Naive thymus-derived CD8-positive, alpha-beta T cell (primary cell): ENCODE measurements at regions of chr12 and their contacts with region 1.

Region 1: DNA sequence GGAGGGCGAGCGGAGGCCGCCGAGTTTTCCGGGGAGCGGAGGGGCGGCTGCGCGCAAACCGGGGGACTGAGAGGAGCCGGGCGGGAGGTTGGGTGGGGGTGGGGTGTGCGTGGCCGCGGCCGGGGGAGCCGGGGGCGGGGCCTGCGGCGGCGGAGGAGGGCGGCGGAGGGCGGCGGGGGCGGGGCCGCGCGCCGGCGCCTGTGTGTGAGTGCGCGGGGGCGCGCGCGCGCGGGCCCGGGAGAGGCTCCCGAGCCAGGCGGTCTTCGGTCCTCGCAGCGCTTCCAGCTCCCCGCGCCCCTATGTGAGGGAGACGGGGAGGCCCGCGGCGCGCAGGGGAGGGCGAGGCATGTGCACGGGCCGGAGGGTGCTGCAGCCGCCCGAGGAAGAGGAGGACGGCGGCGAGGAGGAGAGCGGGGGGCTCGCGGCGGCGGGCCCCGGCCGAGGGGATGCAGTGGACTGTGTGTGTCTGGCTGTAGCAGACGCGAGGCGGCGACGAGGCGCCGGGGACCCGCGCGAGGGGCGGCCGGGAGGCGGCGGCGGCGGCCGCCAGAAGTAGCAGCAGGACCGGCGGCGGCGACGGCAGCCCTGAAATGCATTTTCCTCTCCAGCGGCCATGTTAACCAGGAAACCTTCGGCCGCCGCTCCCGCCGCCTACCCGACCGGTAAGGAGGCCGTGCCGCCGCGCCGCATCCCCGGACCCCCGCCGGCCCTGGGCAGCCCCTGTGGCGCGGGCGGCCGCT is at the start of gene DYRK2:
- DNase-seq: peak; percentile 68 to 89 (median 79)
- ATAC-seq: peak; percentile 51 to 55
- H3K4me3 Mint-ChIP-seq: peak within 1 kb of the TSS; percentile 88 to 99 (median 96)
- H3K27ac Mint-ChIP-seq: peak within 1 kb of the TSS; percentile 92 to 99 (median 98)
- H3K4me1 Mint-ChIP-seq: peaks cover 27 to 49% (median 37%) of the 10 kb centered on the region in 4 donors
- H3K27me3 Mint-ChIP-seq: no peaks in the 10 kb centered on the region
- polyA plus RNA-seq, gene DYRK2: 47.7 to 94.7 (median 62.4) TPM

Region 2: GRCh38 chr12:67268896-67269631 is 379.6 kb before region 1 on chr12 and contains the start of gene CAND1:
- POLR2A ChIA-PET with region 1: interaction called, 10 read pairs
- DNase-seq: peak; percentile 91 to 99 (median 98)
- ATAC-seq: peak; percentile 72 to 78
- H3K4me3 Mint-ChIP-seq: peak within 1 kb of the TSS; percentile 73 to 94 (median 92)
- H3K27ac Mint-ChIP-seq: peak within 1 kb of the TSS; percentile 97 to 100 (median 98)
- H3K4me1 Mint-ChIP-seq: peaks cover 16 to 55% (median 50%) of the 10 kb centered on the region in 4 donors
- H3K27me3 Mint-ChIP-seq: no peaks in the 10 kb centered on the region
- polyA plus RNA-seq, gene CAND1: 44.5 to 66.3 (median 58.7) TPM

Region 3: GRCh38 chr12:67452119-67452805 is 196.4 kb before region 1 on chr12:
- POLR2A ChIA-PET with region 1: interaction called, 12 read pairs
- DNase-seq: no peak
- ATAC-seq: no peak
- H3K4me3 Mint-ChIP-seq: peak overlapping the region in 1 of 10 donors; percentile 64
- H3K27ac Mint-ChIP-seq: peak overlapping the region in 2 of 10 donors; percentile 18 to 53
- H3K4me1 Mint-ChIP-seq: peaks cover 35 to 59% (median 47%) of the 10 kb centered on the region in 4 donors
- H3K27me3 Mint-ChIP-seq: no peaks in the 10 kb centered on the region

Region 4: DNA sequence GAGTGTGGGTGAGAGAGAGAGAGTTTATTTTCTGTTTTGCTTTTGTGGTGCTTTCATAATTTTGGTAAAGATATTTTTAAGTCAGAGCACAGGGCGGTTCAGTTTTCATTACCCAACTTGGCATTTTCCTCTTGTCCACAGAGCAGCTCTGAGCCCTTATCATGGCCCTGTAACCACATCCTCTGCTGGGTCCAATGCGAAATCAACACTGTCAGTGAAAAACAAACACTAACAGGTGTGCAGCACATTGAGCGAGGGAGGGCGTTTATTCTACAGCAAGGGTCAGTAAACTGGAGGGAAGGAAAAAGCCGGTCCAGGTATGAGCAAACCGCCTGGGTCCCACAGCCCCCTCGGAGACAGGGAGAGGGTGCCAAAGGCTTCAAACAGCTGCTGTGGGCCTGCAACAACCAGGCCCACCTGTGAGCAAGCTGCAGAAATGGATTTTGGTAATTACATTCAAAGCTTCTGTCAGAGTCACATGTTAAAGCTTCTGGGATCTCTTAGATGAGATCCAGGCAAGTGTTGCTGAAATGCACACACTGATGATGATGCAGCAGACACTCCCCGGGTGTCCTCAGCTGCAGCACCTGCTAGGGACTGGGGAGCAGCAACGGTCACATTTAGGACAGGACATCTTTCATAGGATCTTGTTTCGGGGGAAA is 132.9 kb before region 1 on chr12:
- POLR2A ChIA-PET with region 1: interaction called, 36 read pairs
- DNase-seq: peak in 8 of 10 donors; percentile 5 to 65 (median 31)
- ATAC-seq: peak; percentile 88 to 92
- H3K4me3 Mint-ChIP-seq: peak overlapping the region; percentile 8 to 81 (median 69)
- H3K27ac Mint-ChIP-seq: peak overlapping the region; percentile 70 to 92 (median 84)
- H3K4me1 Mint-ChIP-seq: peaks cover 32 to 60% (median 52%) of the 10 kb centered on the region in 4 donors
- H3K27me3 Mint-ChIP-seq: no peaks in the 10 kb centered on the region

Region 5: DNA sequence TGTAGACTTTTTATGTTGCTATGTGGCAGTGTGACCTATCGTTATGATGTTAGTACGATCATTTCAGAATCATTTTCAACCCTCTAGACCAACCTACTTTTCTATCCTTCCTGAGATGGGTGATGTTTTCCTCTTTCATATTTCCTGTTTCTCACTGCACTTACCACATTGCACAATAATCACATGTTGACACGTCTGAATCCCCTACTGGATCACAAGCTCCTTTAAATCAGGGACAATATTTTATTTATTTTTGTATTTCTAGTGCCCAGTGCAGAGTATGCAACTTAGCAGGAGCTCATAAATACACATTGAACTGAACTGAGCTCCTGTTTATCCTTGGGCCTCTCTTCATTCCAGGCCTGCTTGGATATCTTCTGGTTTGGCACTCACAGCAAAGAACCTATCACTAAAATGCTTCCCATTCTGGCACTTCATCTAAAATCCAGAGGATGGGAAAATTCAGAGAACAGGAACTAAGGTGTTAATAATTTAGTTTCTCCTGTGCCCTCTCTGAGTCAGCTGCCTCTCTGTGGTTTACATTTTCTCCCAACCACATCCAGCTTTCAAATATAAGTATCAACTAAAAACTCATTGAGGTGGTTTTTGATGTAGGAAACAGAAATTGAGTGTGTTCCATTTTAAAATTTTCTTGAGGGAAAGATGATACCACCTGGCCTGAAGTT is 69.6 kb before region 1 on chr12:
- POLR2A ChIA-PET with region 1: interaction called, 50 read pairs
- DNase-seq: peak in 6 of 10 donors; percentile 27 to 78 (median 64)
- ATAC-seq: peak; percentile 92 to 93
- H3K4me3 Mint-ChIP-seq: peak overlapping the region; percentile 54 to 85 (median 75)
- H3K27ac Mint-ChIP-seq: peak overlapping the region in 8 of 10 donors; percentile 13 to 76 (median 54)
- H3K4me1 Mint-ChIP-seq: peaks cover 33 to 63% (median 52%) of the 10 kb centered on the region in 4 donors
- H3K27me3 Mint-ChIP-seq: no peaks in the 10 kb centered on the region